ENCODE measurements at regions of chr3 and their contacts with region 1.

Region 1: GRCh38 chr3:49769286-49769915 is 16.9 kb downstream of the IP6K1 start:
- DNase-seq: peak; percentile 5
- ATAC-seq: peak; percentile 20; the same call in 1 of the 2 replicates
- H3K4me3 ChIP-seq: no peak overlapping the region
- H3K27ac ChIP-seq: no peak overlapping the region
- H3K4me1 ChIP-seq: peaks cover 13% of the 10 kb centered on the region
- H3K27me3 ChIP-seq: no peaks in the 10 kb centered on the region
- CTCF ChIP-seq: no peak

Region 2: GRCh38 chr3:49747792-49748480 is 21.5 kb before region 1 on chr3:
- CTCF ChIA-PET with region 1: no interaction called
- POLR2A ChIA-PET with region 1: interaction called, 18 read pairs
- intact Hi-C with region 1: loop called (anchors 1 kb)
- DNase-seq: peak; percentile 17
- ATAC-seq: 0 out of 2 replicates have a peak, but pooled peaks have one; percentile 15
- H3K4me3 ChIP-seq: no peak overlapping the region
- H3K27ac ChIP-seq: no peak overlapping the region
- H3K4me1 ChIP-seq: peaks cover 4% of the 10 kb centered on the region
- H3K27me3 ChIP-seq: no peaks in the 10 kb centered on the region
- CTCF ChIP-seq: no peak